K562 (cell line): ENCODE measurements at regions of chr1 and their contacts with region 1.

Region 1: GRCh38 chr1:226051356-226051755 is 11.2 kb upstream of the H3-3A start:
- DNase-seq: no peak
- ATAC-seq: no peak
- H3K4me3 ChIP-seq: no peak overlapping the region
- H3K27ac ChIP-seq: no peak overlapping the region
- H3K4me1 ChIP-seq: peaks cover 0 to 3% of the 10 kb centered on the region in 2 experiments; a peak in 2 of 5 replicates
- H3K27me3 ChIP-seq: no peaks in the 10 kb centered on the region
- CTCF ChIP-seq: no peak
- EP300 ChIP-seq: no peak
- POLR2A ChIP-seq: no peak
- RAD21 ChIP-seq: no peak

Region 2: DNA sequence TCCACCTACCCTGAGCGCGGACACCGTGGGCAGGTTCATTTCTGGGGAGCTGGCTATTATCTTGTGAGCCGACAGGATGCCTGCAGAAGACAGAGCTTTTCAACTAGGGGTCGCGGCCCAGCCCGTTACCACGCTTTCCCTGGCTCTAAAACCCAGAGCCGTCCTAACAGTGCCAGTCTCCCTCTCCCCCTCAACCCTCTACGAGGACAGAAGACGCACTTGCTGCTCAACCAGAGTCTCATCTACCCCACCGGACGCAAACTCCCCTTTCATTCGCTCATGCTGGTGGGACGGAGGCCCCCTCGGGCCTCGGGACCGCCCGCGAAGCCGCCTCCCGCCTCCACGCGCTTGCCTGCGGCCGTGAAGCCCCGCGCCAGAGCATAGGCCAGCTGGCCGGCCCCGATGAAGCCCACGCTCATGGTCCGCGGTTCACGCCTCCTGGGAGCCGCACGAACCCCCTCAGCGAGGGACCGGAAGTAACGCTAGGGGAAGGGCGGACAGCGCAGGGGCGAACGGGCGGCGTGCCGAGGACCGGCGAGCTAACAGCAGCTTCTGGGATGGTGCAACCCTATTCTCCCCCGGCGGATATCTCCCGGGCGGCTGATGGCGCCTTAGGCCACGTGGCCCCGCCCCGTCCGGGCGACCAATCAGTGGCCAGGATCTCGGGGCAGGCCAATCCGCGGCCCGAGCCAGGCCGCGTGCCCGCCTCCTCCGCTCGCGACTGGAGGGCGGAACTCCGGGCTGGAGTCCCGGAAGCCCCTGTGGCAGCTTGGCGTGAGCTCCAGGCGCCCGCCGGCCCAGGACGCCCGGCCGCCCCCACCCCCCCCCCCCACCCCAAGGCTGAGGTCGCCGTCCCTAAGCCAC is 127.4 kb before region 1 on chr1 and contains the start of gene PYCR2:
- CTCF ChIA-PET with region 1: no interaction called
- POLR2A ChIA-PET with region 1: no interaction called
- in situ Hi-C with region 1: no loop called
- intact Hi-C with region 1: no loop called
- DNase-seq: peak; percentile 99 to 100 (median 99)
- ATAC-seq: peak; percentile 91
- H3K4me3 ChIP-seq: peak within 1 kb of the TSS; percentile 94
- H3K27ac ChIP-seq: peak within 1 kb of the TSS; percentile 93
- H3K4me1 ChIP-seq: peaks cover 44 to 69% of the 10 kb centered on the region in 2 experiments
- H3K27me3 ChIP-seq: no peaks in the 10 kb centered on the region
- CTCF ChIP-seq: peak; percentile 5 to 19 (median 10); a peak in 2 of 6 replicates
- EP300 ChIP-seq: peak; percentile 41
- POLR2A ChIP-seq: peak; percentile 97
- RAD21 ChIP-seq: peak in 1 of 2 experiments; percentile 16; a peak in 2 of 4 replicates
- polyA plus RNA-seq, gene PYCR2: 5.5 to 7.9 TPM

Region 3: DNA sequence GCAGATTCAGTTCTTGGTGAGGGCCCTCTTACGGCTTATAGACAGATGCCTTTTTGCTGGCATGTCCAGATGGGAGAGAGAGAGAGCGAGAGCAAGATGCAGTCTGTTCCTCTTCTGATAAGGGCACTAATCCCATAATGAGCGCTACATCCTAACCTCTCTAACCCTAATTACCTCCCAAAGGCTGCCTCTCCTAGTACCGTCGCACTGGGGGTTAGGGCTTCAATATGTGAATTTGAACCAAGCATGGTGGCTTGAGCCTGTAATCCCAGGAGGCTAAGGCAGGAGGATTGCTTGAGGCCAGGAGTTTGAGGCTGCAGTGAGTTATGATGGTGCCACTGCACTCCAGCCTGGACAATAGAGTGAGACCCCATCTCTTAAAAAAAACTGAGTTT is 41.7 kb before region 1 on chr1:
- CTCF ChIA-PET with region 1: interaction called, 4 read pairs
- POLR2A ChIA-PET with region 1: no interaction called
- in situ Hi-C with region 1: loop called (anchors 5 kb)
- intact Hi-C with region 1: no loop called
- DNase-seq: peak; percentile 54 to 81 (median 66)
- ATAC-seq: peak; percentile 75
- H3K4me3 ChIP-seq: no peak overlapping the region
- H3K27ac ChIP-seq: no peak overlapping the region
- H3K4me1 ChIP-seq: peaks cover 24 to 38% of the 10 kb centered on the region in 2 experiments; a peak in 4 of 5 replicates
- H3K27me3 ChIP-seq: no peaks in the 10 kb centered on the region
- CTCF ChIP-seq: no peak
- EP300 ChIP-seq: peak; percentile 70
- POLR2A ChIP-seq: no peak
- RAD21 ChIP-seq: peak in 1 of 2 experiments; percentile 31; a peak in 1 of 4 replicates